Pancreas (tissue), 10 donors: ENCODE measurements at regions of chr1 and their contacts with region 1.

Region 1: DNA sequence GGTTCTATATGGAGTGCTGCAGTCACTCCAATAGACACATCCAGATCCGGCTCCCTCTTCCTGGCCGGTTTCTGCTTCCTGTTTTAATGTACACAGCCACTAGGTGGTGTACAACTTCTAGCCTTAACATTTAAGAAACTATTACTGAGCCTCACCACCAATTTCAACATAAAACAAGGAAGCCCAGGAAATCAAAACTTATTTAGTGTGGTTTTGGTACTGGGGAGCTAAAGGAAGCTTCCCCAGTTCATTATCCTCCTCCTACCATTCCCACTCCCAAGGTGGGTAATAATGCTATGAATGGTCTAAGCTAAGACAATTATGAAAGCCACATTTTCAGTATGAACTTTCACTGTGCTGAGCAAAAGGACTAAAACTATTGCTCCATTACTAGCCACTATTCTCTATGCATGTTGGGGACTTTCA is 25.5 kb upstream of the MTMR11 start:
- DNase-seq: peak in 4 of 6 donors; percentile 34 to 71 (median 42)
- ATAC-seq: peak; percentile 83 to 97 (median 96)
- H3K4me3 ChIP-seq: no peak overlapping the region
- H3K27ac ChIP-seq: peak overlapping the region in 2 of 4 donors; percentile 41 to 48
- H3K4me1 ChIP-seq: peaks cover 0 to 8% (median 0%) of the 10 kb centered on the region in 3 donors
- H3K27me3 ChIP-seq: no peaks in the 10 kb centered on the region
- CTCF ChIP-seq: peak; percentile 37 to 64 (median 55)

Region 2: DNA sequence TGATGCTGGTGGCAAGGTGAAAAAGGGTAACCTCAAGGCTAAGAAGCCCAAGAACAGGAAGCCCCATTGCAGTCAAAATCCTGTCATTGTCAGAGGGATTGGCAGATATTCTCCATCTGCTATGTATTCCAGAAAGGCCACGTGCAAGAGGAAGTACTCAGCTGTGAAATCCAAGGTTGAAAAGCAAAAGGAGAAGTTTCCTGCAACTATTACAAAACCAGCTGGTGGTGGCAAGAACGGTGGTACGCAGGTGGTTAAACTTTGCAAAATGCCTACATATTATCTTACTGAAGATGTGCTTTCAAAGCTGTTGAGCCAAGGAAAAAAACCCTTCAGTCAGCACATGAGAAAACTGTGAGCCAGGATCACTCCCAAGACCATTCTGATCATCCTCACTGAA is 91.8 kb after region 1 on chr1:
- intact Hi-C with region 1: loop called (anchors 5 to 10 kb)
- DNase-seq: no peak
- ATAC-seq: no peak
- H3K4me3 ChIP-seq: no peak overlapping the region
- H3K27ac ChIP-seq: no peak overlapping the region
- H3K4me1 ChIP-seq: no peaks in the 10 kb centered on the region
- H3K27me3 ChIP-seq: no peaks in the 10 kb centered on the region
- CTCF ChIP-seq: no peak

Region 3: DNA sequence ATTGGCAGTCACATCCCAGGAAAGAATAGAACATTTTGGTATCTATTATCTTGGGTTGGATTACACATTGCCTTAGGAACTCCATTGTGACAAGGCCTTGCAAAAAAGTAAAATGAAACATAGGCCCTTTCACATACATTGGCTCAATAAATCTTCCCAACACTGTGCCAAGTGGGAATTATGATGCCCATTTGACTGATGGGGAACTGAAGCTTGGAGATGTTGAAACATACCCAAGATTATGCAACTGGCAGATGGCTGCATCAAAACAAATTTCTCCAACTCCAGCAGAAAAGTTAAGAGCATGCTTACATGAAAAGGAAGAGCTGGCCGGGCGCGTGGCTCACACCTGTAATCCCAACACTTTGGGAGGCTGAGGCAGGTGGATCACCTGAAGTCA is 214.5 kb after region 1 on chr1:
- intact Hi-C with region 1: loop called in 1 of 3 experiments (anchors 10 kb)
- DNase-seq: no peak
- ATAC-seq: peak in 1 of 4 donors; percentile 31
- H3K4me3 ChIP-seq: no peak overlapping the region
- H3K27ac ChIP-seq: no peak overlapping the region
- H3K4me1 ChIP-seq: no peaks in the 10 kb centered on the region
- H3K27me3 ChIP-seq: no peaks in the 10 kb centered on the region
- CTCF ChIP-seq: no peak